Calu3 (cell line): ENCODE measurements at regions of chr19 and their contacts with region 1.

Region 1: GRCh38 chr19:49272184-49272583 is 52.8 kb downstream of the SLC6A16 start:
- DNase-seq: no peak
- H3K4me3 Mint-ChIP-seq: no peak overlapping the region
- H3K27ac Mint-ChIP-seq: no peak overlapping the region
- H3K4me1 Mint-ChIP-seq: no peaks in the 10 kb centered on the region
- H3K27me3 Mint-ChIP-seq: peaks cover 42% of the 10 kb centered on the region
- CTCF ChIP-seq: no peak

Region 2: DNA sequence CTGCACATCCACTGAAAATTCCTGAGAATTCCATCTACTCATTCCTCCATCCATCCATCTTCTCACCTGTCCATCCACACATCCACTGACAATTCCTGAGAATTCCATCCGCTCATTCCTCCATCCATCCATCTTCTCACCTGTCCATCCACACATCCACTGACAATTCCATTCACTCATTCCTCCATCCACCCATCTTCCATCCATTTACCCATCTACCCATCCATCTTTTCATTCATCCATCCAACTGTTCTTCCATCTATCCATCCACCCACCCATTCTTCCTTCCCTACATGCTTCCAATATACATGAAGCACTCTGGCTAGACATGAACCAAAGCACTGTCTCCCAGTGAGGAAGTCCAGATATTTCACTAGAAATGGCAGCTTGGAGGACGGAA is 99.0 kb before region 1 on chr19:
- CTCF ChIA-PET with region 1: no interaction called
- intact Hi-C with region 1: no loop called
- DNase-seq: no peak
- H3K4me3 Mint-ChIP-seq: no peak overlapping the region
- H3K27ac Mint-ChIP-seq: no peak overlapping the region
- H3K4me1 Mint-ChIP-seq: peaks cover 8% of the 10 kb centered on the region
- H3K27me3 Mint-ChIP-seq: no peaks in the 10 kb centered on the region
- CTCF ChIP-seq: no peak

Region 3: DNA sequence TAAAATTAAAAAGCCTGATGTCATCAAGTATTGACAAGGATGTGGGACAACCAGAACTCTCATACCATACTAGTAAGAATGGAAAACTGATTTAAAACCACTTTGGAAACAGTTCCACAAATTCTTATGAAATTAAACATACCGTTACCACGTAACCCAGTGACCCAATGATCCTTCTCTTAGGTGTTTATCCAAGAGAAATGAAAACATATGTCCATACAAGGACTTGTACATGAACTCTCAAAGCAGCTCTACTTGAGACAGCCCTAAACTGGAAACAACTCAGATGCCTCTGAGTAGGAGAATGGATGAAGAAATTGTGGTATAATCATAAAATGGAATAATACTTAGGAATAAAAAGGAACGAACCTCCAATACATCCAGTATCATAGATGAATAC is 25.2 kb after region 1 on chr19:
- CTCF ChIA-PET with region 1: no interaction called
- intact Hi-C with region 1: loop called (anchors 2 kb)
- DNase-seq: no peak
- H3K4me3 Mint-ChIP-seq: no peak overlapping the region
- H3K27ac Mint-ChIP-seq: no peak overlapping the region
- H3K4me1 Mint-ChIP-seq: no peaks in the 10 kb centered on the region
- H3K27me3 Mint-ChIP-seq: peaks cover 43% of the 10 kb centered on the region
- CTCF ChIP-seq: no peak